Right cardiac atrium (tissue), 5 donors: ENCODE measurements at regions of chr18 and their contacts with region 1.

Region 1: DNA sequence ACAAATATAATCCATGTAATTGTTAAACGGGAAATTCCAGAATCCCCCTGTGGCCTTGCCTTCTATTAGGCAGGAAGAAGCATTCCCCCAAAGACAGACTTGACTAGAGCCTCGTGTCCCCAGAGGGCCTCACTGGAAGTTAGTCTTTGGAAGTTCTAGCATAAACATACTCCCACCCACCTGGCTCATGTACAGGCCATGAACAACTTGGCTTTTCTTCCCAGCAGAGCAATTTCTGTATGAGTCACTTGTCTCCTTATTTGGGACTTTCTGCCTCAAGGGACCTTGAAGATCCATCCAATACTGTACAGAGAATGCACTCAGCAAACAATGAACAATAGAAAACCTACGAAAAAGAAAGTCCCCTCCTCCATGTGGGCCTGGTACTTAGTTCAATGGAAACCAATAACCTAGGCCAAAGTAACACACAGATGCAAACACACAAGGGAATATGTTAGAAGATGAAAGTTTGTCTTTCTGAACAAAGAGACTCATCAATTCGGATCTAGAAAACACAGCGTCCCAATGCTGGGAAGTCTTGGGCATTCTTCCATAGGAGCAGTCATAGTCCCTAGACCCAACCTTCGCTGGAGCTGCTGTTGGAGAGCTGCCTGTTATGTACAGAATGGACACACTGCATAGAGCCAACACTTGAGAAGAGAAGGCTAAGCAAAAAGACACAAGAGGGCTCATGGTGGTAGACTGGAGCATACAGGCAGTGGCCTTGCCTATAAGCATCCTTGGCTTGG is 303.5 kb downstream of the HRH4 start:
- DNase-seq: peak; percentile 47 to 61 (median 57)
- ATAC-seq: peak; percentile 80 to 81
- H3K4me3 ChIP-seq: no peak overlapping the region
- H3K27ac ChIP-seq: peak overlapping the region; percentile 42
- H3K4me1 ChIP-seq: peaks cover 4% of the 10 kb centered on the region
- H3K27me3 ChIP-seq: no peaks in the 10 kb centered on the region

Region 2: GRCh38 chr18:24683965-24684364 is 80.0 kb before region 1 on chr18:
- intact Hi-C with region 1: loop called in 1 of 4 experiments (anchors 10 kb)
- DNase-seq: no peak
- ATAC-seq: no peak
- H3K4me3 ChIP-seq: no peak overlapping the region
- H3K27ac ChIP-seq: no peak overlapping the region
- H3K4me1 ChIP-seq: no peaks in the 10 kb centered on the region
- H3K27me3 ChIP-seq: no peaks in the 10 kb centered on the region